Naive thymus-derived CD4-positive, alpha-beta T cell (primary cell): ENCODE measurements at regions of chr13 and their contacts with region 1.

Region 1: DNA sequence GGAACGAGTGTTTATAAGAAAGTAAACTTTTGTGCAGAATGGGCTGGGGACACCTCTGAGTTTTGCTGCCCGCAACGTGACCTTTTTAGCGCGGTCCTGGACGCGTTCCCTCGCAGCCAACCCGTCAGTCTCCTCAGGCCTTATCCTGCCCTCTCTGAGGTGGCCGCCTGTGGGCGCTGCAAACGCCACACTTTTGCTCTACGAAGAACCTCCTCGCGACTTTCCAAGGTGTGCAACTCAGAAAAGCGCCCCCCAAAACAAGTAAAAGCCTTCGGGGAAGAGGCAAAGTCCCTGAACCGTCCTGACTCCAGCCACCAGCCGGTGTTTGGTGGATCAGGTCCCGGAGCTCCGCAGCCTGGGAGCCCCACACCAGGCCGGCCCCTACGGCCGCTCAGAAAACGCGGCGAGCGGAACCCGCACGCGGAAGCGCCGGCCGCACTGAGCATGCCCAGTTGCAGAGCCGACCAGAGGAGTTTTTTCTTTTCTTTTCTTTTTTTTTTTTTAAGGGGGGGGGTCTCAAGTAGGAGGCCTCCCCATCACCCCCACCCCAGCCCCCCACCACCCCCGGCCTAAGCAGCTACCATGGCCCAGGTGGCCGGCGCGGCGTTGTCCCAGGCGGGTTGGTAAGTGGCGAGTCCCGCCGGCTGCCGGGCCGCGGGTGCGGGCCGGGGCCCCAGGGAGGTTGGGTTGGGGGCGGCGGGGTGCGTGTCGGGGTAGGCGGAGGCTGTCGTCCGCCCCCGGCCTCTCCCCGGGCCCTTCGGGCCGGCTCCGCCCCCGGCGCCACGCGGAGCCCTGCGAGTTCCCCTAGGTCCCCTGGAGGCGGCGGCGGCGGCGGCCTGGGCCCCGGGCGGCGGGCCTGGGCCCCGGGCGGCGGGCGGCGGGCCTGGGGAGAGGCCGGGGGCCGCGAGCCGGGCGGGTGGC is at the start of gene TDRD3:
- DNase-seq: peak; percentile 71 to 86 (median 82)
- ATAC-seq: peak; percentile 82
- H3K4me3 ChIP-seq: peak within 1 kb of the TSS; percentile 85
- H3K4me3 Mint-ChIP-seq: peak within 1 kb of the TSS; percentile 88 to 98 (median 95)
- H3K27ac ChIP-seq: peak within 1 kb of the TSS; percentile 80
- H3K27ac Mint-ChIP-seq: peak within 1 kb of the TSS; percentile 91 to 99 (median 96)
- H3K4me1 ChIP-seq: peaks cover 15 to 20% of the 10 kb centered on the region in 2 donors
- H3K4me1 Mint-ChIP-seq: peaks cover 25 to 54% (median 44%) of the 10 kb centered on the region in 7 donors
- H3K27me3 ChIP-seq: no peaks in the 10 kb centered on the region
- H3K27me3 Mint-ChIP-seq: no peaks in the 10 kb centered on the region
- total RNA-seq, gene TDRD3: 24.7 to 33.6 (median 27.2) TPM

Region 2: GRCh38 chr13:60019119-60019993 is 377.7 kb before region 1 on chr13:
- CTCF ChIA-PET with region 1: no interaction called
- POLR2A ChIA-PET with region 1: no interaction called
- intact Hi-C with region 1: loop called in 1 of 2 experiments (anchors 2 kb)
- DNase-seq: no peak
- ATAC-seq: peak; percentile 26
- H3K4me3 ChIP-seq: no peak overlapping the region
- H3K4me3 Mint-ChIP-seq: peak overlapping the region in 1 of 10 donors; percentile 69
- H3K27ac ChIP-seq: no peak overlapping the region
- H3K27ac Mint-ChIP-seq: peak overlapping the region in 1 of 9 donors; percentile 84
- H3K4me1 ChIP-seq: no peaks in the 10 kb centered on the region
- H3K4me1 Mint-ChIP-seq: peaks cover 0 to 45% (median 9%) of the 10 kb centered on the region in 7 donors
- H3K27me3 ChIP-seq: no peaks in the 10 kb centered on the region
- H3K27me3 Mint-ChIP-seq: no peaks in the 10 kb centered on the region

Region 3: DNA sequence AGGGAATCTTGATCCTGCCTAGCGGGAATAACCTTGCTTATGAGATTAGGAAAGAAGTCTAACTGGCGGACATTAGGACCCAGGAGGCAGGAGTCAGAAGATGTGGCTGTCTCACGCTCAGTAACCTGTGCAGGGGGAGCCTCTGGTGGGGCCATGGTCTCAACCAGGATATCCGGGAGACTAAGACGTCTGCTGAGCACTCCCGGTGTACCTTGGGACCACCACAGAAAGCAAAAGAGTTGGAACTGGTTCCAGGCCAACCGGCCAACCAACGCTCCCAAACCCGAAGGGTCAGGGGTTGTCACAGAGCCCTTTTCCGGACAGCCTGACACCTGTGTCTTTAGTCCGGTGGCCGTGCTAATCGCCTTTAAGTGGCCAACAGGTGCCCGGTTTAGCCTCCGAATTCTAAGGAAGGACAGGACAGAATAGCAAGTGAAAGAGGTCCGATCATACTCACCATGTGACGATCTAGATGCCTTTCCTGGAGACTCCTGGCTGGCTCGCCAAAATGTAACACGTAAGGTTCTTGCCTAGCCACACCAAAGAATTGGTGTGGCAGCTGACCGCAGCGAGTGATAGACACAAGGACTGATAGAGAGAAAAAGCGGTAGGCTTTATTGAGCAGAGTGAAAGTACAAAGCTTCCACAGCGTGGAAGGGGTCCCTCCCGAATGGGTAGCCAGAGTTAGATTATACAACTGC is 129.4 kb before region 1 on chr13:
- CTCF ChIA-PET with region 1: no interaction called
- POLR2A ChIA-PET with region 1: no interaction called
- intact Hi-C with region 1: loop called in 1 of 2 experiments (anchors 2 kb)
- DNase-seq: peak in 6 of 9 donors; percentile 5 to 26 (median 14)
- ATAC-seq: peak; percentile 58
- H3K4me3 ChIP-seq: peak overlapping the region; percentile 79
- H3K4me3 Mint-ChIP-seq: no peak overlapping the region
- H3K27ac ChIP-seq: peak overlapping the region; percentile 49
- H3K27ac Mint-ChIP-seq: no peak overlapping the region
- H3K4me1 ChIP-seq: no peaks in the 10 kb centered on the region
- H3K4me1 Mint-ChIP-seq: peaks cover 0 to 3% (median 0%) of the 10 kb centered on the region in 7 donors
- H3K27me3 ChIP-seq: no peaks in the 10 kb centered on the region
- H3K27me3 Mint-ChIP-seq: peaks cover 5 to 13% (median 11%) of the 10 kb centered on the region in 5 donors